ENCODE measurements at regions of chr12 and their contacts with region 1.

Region 1: DNA sequence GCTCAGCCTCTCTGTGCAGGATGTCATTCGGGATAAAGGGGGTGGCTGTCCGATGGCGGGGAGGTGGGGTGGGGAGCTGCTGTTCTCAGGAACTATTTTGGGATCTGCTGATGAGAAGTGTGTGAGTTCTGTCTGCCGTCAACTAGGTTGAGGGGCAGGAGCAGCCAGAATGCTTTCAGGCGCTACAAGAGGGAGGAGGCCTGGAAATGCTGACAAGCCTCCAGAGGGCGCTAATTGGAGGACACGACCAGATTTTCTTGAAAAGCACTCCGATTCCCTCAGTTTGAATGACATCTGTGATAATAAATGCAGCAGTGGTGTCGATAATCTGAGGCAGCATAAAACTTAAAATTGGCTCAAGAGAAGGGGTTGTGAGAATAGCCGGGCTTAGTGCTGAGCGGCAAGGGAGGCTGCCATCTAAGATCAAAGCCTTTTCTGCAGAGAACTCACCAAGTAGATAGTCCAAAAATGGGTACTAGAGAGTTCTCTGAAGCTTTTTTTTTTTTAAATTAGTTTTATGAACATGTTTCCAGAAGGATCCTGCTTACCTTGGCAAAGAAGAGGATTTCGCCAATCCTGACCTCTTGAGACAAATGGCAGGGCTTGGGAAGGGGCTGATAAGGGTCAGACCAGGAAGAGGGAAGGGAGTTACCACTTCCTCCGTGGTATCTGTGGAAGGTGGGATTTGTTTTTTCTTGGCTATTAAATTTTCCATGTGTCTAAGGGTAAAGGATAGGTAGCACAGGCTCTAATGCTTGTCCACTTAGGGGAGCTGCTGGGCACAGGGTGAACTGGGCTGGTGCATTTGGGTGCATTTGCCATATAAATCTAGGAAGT is 94.4 kb downstream of the CRACR2A start:
- DNase-seq: peak; percentile 33 to 51
- H3K4me3 ChIP-seq: no peak overlapping the region
- H3K27ac ChIP-seq: no peak overlapping the region
- H3K4me1 ChIP-seq: no peaks in the 10 kb centered on the region
- H3K27me3 ChIP-seq: no peaks in the 10 kb centered on the region
- CTCF ChIP-seq: peak in 2 of 7 experiments; percentile 21 to 44
- EP300 ChIP-seq: no peak
- POLR2A ChIP-seq: no peak

Region 2: DNA sequence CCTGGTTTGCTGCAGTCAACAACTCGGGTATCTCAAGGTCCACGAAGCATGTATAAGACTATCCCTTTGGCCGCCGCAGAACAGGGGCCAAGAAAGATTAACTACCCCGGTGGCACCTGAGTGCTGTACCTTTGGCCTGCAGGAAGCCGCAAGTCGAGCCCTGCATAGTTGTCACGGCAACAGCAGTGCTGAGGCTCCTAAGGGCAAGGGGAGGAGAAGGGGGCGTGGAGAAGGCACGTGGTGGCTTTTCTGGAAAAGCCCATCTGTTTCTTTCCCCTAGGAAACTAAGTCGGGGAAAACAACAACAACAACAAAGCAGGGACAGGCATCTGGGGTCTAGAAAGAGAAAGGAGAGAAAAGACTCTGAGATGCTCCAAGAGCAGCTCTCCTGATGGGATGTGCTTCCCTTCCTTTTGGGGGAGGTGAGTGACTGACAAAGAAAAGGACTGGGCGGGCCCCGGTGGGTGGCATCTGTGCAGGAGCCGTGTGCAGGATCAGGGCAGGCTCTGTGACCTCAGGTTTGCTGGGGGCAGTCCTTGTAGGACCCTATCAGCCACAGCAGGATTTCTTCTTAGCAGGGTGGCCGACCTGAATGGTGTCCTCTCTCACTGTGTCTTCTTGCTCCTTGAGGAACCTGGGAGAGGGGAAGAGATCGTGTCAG is 43.6 kb before region 1 on chr12:
- intact Hi-C with region 1: no loop called
- DNase-seq: peak in 1 of 2 donors; percentile 23
- H3K4me3 ChIP-seq: no peak overlapping the region
- H3K27ac ChIP-seq: no peak overlapping the region
- H3K4me1 ChIP-seq: no peaks in the 10 kb centered on the region
- H3K27me3 ChIP-seq: no peaks in the 10 kb centered on the region
- CTCF ChIP-seq: no peak
- EP300 ChIP-seq: no peak
- POLR2A ChIP-seq: no peak

Region 3: GRCh38 chr12:3777206-3777809 is 118.8 kb after region 1 on chr12:
- intact Hi-C with region 1: loop called (anchors 10 kb)
- DNase-seq: peak in 1 of 2 donors; percentile 74
- H3K4me3 ChIP-seq: no peak overlapping the region
- H3K27ac ChIP-seq: no peak overlapping the region
- H3K4me1 ChIP-seq: no peaks in the 10 kb centered on the region
- H3K27me3 ChIP-seq: no peaks in the 10 kb centered on the region
- CTCF ChIP-seq: peak in 5 of 7 experiments; percentile 19 to 67 (median 62)
- EP300 ChIP-seq: no peak
- POLR2A ChIP-seq: no peak

Region 4: DNA sequence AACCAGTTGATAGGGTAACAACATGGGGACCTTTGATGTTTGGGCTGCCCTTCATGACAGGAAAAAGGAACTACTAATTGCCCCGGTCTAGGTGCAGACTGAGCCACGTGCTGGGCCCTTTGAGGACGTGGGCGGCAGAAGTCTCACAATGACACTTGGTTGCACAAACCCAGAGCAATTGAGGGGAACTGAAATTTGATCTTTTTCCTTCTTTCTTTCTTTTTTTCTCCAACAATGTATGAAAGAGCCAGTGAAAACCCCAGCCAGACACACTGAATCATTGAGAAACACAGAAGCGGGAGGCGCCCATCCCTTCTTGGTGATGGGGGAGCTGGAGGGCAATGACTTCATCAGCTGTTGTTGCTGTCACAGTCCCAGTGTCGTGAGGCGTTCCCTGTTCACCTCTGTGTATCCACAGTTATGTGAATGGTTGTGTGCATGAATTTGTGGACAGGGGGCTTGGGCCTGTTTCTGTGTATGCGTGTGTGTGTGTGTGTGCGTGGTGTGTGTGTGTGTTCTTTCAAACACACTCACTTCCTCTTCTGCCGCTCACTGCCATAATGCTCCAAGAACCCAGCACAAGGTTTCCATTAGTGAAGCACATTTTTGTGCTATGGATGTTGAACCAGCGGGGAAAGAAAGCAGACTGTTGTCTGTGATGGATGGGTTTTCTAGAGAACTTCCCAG is 477.5 kb after region 1 on chr12:
- intact Hi-C with region 1: no loop called
- DNase-seq: peak in 1 of 2 donors; percentile 81
- H3K4me3 ChIP-seq: no peak overlapping the region
- H3K27ac ChIP-seq: no peak overlapping the region
- H3K4me1 ChIP-seq: peaks cover 0 to 7% (median 0%) of the 10 kb centered on the region in 4 donors
- H3K27me3 ChIP-seq: peaks cover 0 to 18% (median 0%) of the 10 kb centered on the region in 3 donors
- CTCF ChIP-seq: no peak
- EP300 ChIP-seq: no peak
- POLR2A ChIP-seq: no peak

Measured in stomach (tissue), 19 donors.